Activated CD4-positive, alpha-beta T cell treated with anti-CD3 and anti-CD28 coated beads for 36 hours (primary cell): ENCODE measurements at regions of chr4 and their contacts with region 1.

Region 1: GRCh38 chr4:139656614-139657486 is 8.8 kb upstream of the MGST2 start:
- DNase-seq: peak; percentile 73
- ATAC-seq: peak; percentile 48
- H3K4me3 Mint-ChIP-seq: peak overlapping the region; percentile 57
- H3K27ac Mint-ChIP-seq: peak overlapping the region; percentile 99
- H3K4me1 Mint-ChIP-seq: peaks cover 24% of the 10 kb centered on the region
- H3K27me3 Mint-ChIP-seq: no peaks in the 10 kb centered on the region

Region 2: GRCh38 chr4:139015269-139015947 is 641.4 kb before region 1 on chr4 and contains the start of gene NOCT:
- CTCF ChIA-PET with region 1: no interaction called
- POLR2A ChIA-PET with region 1: no interaction called
- intact Hi-C with region 1: loop called in 1 of 2 experiments (anchors 5 kb)
- DNase-seq: peak; percentile 98
- ATAC-seq: peak; percentile 92
- H3K4me3 Mint-ChIP-seq: peak within 1 kb of the TSS; percentile 90
- H3K27ac Mint-ChIP-seq: peak within 1 kb of the TSS; percentile 96
- H3K4me1 Mint-ChIP-seq: peaks cover 41% of the 10 kb centered on the region
- H3K27me3 Mint-ChIP-seq: no peaks in the 10 kb centered on the region
- total RNA-seq, gene NOCT: 16.5 to 20.5 TPM

Region 3: DNA sequence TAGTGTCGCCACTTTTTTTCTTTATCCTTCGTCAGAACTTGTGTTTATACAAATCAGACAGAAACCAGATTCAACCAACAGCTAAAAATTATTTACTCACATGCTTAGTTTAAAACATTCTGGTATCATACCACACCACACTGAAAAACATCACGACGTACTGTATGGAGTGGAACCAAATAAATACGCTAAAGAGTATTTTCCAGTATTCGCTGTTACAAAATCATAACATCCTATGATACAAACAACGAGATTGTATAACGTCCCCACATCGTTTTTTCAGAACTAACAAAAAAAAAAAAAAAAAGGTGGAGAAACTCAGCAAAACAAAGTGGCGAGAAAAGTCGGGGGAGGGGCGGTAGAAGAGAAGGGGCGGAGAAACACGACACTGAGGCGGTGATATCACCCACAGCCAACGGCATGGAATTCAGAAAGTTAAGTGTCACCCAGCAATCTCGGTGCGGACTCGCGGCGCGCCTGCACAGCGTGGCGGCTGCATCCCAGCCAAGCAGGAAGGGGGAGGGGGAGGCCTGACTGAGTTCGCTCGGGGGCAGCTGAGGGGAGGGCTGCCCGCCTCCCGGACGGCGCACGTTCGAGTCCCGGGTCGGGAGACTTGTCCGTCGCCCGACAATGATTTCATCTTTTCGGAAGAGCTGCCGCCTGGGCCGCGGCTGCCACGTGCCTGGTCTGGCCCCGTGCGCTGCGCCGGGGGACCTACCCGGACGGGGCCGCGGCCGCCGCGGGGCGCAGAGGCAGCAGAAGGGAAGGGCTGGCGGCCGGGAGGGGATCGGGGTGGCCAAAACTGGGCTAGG is 101.8 kb before region 1 on chr4:
- CTCF ChIA-PET with region 1: interaction called, 4 read pairs
- POLR2A ChIA-PET with region 1: interaction called, 4 read pairs
- intact Hi-C with region 1: loop called (anchors 2 to 5 kb)
- DNase-seq: peak; percentile 91
- ATAC-seq: peak; percentile 76
- H3K4me3 Mint-ChIP-seq: peak overlapping the region; percentile 96
- H3K27ac Mint-ChIP-seq: peak overlapping the region; percentile 91
- H3K4me1 Mint-ChIP-seq: peaks cover 45% of the 10 kb centered on the region
- H3K27me3 Mint-ChIP-seq: no peaks in the 10 kb centered on the region

Region 4: DNA sequence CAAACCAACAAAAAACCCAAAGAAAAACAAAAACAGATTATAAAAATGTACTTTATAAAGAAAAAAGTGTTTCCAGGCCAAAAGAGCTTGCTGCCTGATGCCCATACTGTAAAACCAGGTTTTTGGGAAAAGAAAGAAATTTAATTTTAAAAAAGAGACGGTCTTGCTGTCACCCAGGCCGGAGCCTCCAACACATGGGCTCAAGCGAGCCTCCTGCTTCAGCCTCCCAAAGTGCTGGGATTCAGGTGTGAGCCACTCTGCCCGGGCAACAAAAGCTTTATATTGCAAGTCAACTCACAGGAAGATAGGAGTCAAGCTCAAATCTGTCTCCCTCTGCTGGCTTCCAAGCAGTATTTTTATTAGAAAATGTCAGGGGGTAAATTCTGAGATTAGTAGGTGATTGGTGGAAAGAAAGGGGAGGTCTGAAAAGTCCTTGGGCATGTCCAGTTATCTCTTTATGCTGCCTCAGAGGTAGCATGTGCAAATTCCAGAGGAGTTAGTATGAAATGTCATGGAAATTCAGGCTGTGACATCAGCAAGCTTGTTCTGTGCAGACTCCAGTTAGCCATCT is 48.1 kb after region 1 on chr4:
- CTCF ChIA-PET with region 1: interaction called, 8 read pairs
- POLR2A ChIA-PET with region 1: no interaction called
- intact Hi-C with region 1: loop called (anchors 2 to 5 kb)
- DNase-seq: no peak
- ATAC-seq: no peak
- H3K4me3 Mint-ChIP-seq: no peak overlapping the region
- H3K27ac Mint-ChIP-seq: no peak overlapping the region
- H3K4me1 Mint-ChIP-seq: no peaks in the 10 kb centered on the region
- H3K27me3 Mint-ChIP-seq: no peaks in the 10 kb centered on the region

Region 5: GRCh38 chr4:139858436-139859225 is 201.8 kb after region 1 on chr4:
- CTCF ChIA-PET with region 1: no interaction called
- POLR2A ChIA-PET with region 1: no interaction called
- intact Hi-C with region 1: loop called (anchors 1 to 2 kb)
- DNase-seq: peak; percentile 55
- ATAC-seq: peak; percentile 94
- H3K4me3 Mint-ChIP-seq: no peak overlapping the region
- H3K27ac Mint-ChIP-seq: no peak overlapping the region
- H3K4me1 Mint-ChIP-seq: peaks cover 32% of the 10 kb centered on the region
- H3K27me3 Mint-ChIP-seq: peaks cover 33% of the 10 kb centered on the region

Region 6: GRCh38 chr4:140095694-140096482 is 439.0 kb after region 1 on chr4:
- CTCF ChIA-PET with region 1: interaction called, 4 read pairs
- POLR2A ChIA-PET with region 1: no interaction called
- intact Hi-C with region 1: loop called in 1 of 2 experiments (anchors 5 kb)
- DNase-seq: peak; percentile 81
- ATAC-seq: peak; percentile 83
- H3K4me3 Mint-ChIP-seq: peak overlapping the region; percentile 75
- H3K27ac Mint-ChIP-seq: peak overlapping the region; percentile 99
- H3K4me1 Mint-ChIP-seq: peaks cover 93% of the 10 kb centered on the region
- H3K27me3 Mint-ChIP-seq: no peaks in the 10 kb centered on the region

Region 7: GRCh38 chr4:140359562-140360427 is 702.9 kb after region 1 on chr4:
- CTCF ChIA-PET with region 1: interaction called, 9 read pairs
- POLR2A ChIA-PET with region 1: interaction called, 3 read pairs
- intact Hi-C with region 1: loop called in 1 of 2 experiments (anchors 1 kb)
- DNase-seq: peak; percentile 89
- ATAC-seq: peak; percentile 97
- H3K4me3 Mint-ChIP-seq: no peak overlapping the region
- H3K27ac Mint-ChIP-seq: no peak overlapping the region
- H3K4me1 Mint-ChIP-seq: no peaks in the 10 kb centered on the region
- H3K27me3 Mint-ChIP-seq: peaks cover 3% of the 10 kb centered on the region